Activated T-helper 2 cell treated with anti-CD3 and anti-CD28 coated beads, Interferon-gamma antibody, Interleukin-2, Interleukin-4, amounts not matched to agents 10 μg/mL and 5 μg/mL and 100 μg/mL, durations not matched to agents 14 hours and 24 hours and 36 hours (primary cell): ENCODE measurements at regions of chr19 and their contacts with region 1.

Region 1: DNA sequence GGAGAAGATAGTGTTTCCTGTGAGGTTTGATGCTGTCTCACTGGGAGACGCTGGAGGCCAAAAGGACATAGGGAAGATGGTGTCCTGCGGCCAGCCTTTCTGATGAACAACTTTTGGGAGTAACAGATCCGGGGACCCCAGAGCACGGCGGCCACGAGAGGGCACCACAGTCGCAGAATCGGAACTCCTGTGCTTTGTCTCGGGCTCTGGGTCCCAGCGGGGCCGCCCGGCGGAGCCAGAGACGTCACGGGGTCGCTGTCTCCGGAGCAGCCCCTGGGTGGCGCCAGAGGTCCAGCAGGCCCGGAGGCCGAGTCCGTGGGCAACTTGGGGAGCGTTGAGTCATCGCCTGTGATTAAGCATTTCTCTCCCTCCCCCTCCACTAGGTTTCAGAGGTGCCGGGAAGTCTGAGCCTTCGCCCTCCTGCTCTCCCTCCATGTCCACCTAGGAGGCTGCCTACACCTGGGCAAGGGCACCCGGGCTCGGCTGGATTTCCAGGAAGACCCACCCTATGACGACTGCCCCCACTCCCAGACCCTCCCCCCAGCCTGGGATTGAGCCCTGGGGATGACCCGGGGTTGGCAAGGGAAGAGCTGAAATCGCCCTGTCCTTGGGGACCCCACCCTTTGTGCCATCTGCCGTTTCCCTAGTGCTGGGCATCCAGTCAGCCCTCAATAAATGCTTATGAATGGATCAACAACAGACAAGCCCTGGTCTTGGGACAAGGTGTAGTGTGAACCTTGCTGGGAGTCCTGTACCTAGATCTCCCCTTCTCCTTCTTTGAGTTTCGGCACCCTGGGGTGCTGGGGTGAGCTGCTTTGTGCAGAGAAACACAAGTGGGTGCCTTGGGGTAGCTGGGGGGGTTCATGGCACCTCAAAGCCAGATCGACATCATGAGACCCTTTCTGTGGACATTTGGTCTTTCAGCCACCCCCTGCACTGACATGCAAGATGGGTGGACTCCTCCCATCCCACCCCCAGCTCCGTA is 3.4 kb downstream of the NANOS3 start:
- DNase-seq: peak; percentile 96
- H3K4me3 Mint-ChIP-seq: peak overlapping the region; percentile 51
- H3K27ac Mint-ChIP-seq: peak overlapping the region; percentile 87
- H3K4me1 Mint-ChIP-seq: peaks cover 24% of the 10 kb centered on the region
- H3K27me3 Mint-ChIP-seq: peaks cover 4% of the 10 kb centered on the region

Region 2: GRCh38 chr19:13952154-13953035 is 72.0 kb after region 1 on chr19 and contains the start of gene DCAF15:
- intact Hi-C with region 1: loop called (anchors 2 kb)
- DNase-seq: peak; percentile 99
- H3K4me3 Mint-ChIP-seq: peak within 1 kb of the TSS; percentile 97
- H3K27ac Mint-ChIP-seq: peak within 1 kb of the TSS; percentile 93
- H3K4me1 Mint-ChIP-seq: peaks cover 15% of the 10 kb centered on the region
- H3K27me3 Mint-ChIP-seq: peaks cover 2% of the 10 kb centered on the region
- total RNA-seq, gene DCAF15: 60.6 and 64.0 TPM in 2 replicates

Region 3: GRCh38 chr19:13962699-13963602 is 82.6 kb after region 1 on chr19:
- intact Hi-C with region 1: no loop called
- DNase-seq: no peak
- H3K4me3 Mint-ChIP-seq: no peak overlapping the region
- H3K27ac Mint-ChIP-seq: no peak overlapping the region
- H3K4me1 Mint-ChIP-seq: no peaks in the 10 kb centered on the region
- H3K27me3 Mint-ChIP-seq: no peaks in the 10 kb centered on the region

Region 4: GRCh38 chr19:14006243-14006765 is 126.0 kb after region 1 on chr19 and contains the start of gene RFX1:
- intact Hi-C with region 1: loop called (anchors 1 kb)
- DNase-seq: peak; percentile 99
- H3K4me3 Mint-ChIP-seq: peak within 1 kb of the TSS; percentile 84
- H3K27ac Mint-ChIP-seq: peak within 1 kb of the TSS; percentile 94
- H3K4me1 Mint-ChIP-seq: peaks cover 34% of the 10 kb centered on the region
- H3K27me3 Mint-ChIP-seq: no peaks in the 10 kb centered on the region
- total RNA-seq, gene RFX1: 15.7 and 17.0 TPM in 2 replicates

Region 5: GRCh38 chr19:14048443-14049153 is 168.2 kb after region 1 on chr19:
- intact Hi-C with region 1: loop called (anchors 1 kb)
- DNase-seq: peak; percentile 53
- H3K4me3 Mint-ChIP-seq: no peak overlapping the region
- H3K27ac Mint-ChIP-seq: no peak overlapping the region
- H3K4me1 Mint-ChIP-seq: no peaks in the 10 kb centered on the region
- H3K27me3 Mint-ChIP-seq: no peaks in the 10 kb centered on the region

Region 6: DNA sequence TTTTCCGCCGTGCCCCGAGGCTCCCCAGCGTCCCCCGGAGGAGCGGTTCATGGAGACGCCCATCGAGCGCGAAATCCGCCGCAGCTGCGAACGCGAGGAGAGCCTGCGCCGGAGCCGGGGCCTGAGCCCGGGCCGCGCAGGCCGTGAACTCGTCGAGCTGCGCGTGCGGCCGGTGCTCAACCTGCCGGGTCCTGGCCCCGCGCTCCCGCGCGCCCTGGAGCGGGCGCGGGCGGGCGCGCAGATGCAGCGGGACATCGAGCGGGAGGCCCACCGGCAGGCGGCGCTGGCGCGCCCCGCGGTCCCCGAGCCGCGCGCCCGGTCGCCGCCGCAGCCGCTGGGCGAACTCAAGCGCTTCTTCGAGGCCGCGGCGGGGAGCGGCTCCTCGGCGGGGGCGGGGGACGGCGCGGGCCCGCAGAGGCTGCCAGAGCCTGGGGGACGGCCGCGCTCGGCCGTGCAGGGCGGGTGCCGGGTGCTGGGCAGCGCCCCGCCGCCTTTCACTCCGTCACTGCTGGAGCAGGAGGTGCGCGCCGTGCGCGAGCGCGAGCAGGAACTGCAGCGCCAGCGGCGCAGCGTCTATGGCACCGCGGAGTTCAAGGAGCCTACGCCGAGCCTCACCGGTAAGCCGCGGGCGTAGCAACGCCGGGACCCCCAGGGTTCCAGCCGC is 193.0 kb after region 1 on chr19:
- intact Hi-C with region 1: loop called (anchors 1 kb)
- DNase-seq: peak; percentile 77
- H3K4me3 Mint-ChIP-seq: peak overlapping the region; percentile 97
- H3K27ac Mint-ChIP-seq: peak overlapping the region; percentile 93
- H3K4me1 Mint-ChIP-seq: peaks cover 8% of the 10 kb centered on the region
- H3K27me3 Mint-ChIP-seq: no peaks in the 10 kb centered on the region

Region 7: DNA sequence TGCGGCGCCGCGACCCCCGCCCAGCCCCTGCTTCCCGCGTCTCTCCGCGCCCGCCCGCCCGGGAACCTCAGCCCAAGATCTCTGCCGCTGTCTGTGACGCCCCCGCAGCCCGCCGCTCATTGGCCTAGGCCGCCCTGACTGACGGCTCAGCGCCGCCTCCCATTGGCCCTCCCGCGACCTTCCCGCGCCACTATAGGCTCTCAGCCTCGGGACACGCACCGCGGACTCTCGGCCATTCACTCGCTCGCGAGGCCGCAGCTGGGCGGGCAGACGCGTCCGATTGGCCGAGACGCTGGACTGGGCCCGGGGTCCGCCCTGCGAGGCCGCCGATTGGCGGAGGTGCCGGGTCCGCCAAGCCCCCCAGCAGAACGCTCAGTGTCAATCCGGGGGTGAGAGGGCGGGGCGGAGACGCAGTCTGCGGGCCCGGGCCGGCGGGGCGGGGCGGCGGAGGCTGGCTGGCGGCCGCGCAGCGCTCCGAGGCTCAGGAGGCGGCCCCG is 237.4 kb after region 1 on chr19 and contains the start of gene PRKACA:
- intact Hi-C with region 1: loop called (anchors 1 kb)
- DNase-seq: peak; percentile 99
- H3K4me3 Mint-ChIP-seq: peak within 1 kb of the TSS; percentile 96
- H3K27ac Mint-ChIP-seq: peak within 1 kb of the TSS; percentile 95
- H3K4me1 Mint-ChIP-seq: peaks cover 28% of the 10 kb centered on the region
- H3K27me3 Mint-ChIP-seq: no peaks in the 10 kb centered on the region
- total RNA-seq, gene PRKACA: 75.4 and 76.8 TPM in 2 replicates